Activated B cell treated with CpG ODN at 0.5 μM for 24 hours (primary cell): ENCODE measurements at regions of chr19 and their contacts with region 1.

Region 1: DNA sequence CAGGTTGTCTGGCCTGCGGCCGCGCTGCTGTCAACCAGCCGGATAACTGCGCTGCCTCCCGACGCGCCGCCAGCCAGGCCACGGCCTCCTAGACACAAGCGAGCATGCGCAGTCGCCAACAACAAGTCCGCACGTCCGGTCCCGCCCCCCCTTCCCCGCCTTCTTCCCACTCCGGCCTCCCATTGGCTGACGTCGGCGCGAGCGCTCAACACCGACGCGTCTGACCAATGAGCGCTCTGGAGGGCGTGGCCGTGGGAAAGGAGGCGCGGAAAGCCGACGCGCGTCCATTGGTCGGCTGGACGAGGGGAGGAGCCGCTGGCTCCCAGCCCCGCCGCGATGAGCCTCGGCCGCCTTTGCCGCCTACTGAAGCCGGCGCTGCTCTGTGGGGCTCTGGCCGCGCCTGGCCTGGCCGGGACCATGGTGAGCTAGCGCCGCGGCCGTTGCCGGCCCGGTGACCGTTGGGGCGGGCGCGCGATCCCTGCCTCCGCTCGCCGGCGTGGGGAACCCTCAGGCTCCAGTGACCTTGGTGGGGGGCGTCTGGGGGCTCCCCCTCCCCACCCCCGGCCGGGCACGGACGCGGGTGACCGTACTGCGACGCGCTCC is at the start of gene GPX4:
- DNase-seq: peak; percentile 93
- ATAC-seq: peak; percentile 86
- H3K4me3 Mint-ChIP-seq: peak within 1 kb of the TSS; percentile 81
- H3K27ac Mint-ChIP-seq: peak within 1 kb of the TSS; percentile 83
- H3K4me1 Mint-ChIP-seq: peaks cover 55% of the 10 kb centered on the region
- H3K27me3 Mint-ChIP-seq: no peaks in the 10 kb centered on the region
- CTCF ChIP-seq: no peak
- total RNA-seq, gene GPX4: 213 and 218 TPM in 2 replicates

Region 2: DNA sequence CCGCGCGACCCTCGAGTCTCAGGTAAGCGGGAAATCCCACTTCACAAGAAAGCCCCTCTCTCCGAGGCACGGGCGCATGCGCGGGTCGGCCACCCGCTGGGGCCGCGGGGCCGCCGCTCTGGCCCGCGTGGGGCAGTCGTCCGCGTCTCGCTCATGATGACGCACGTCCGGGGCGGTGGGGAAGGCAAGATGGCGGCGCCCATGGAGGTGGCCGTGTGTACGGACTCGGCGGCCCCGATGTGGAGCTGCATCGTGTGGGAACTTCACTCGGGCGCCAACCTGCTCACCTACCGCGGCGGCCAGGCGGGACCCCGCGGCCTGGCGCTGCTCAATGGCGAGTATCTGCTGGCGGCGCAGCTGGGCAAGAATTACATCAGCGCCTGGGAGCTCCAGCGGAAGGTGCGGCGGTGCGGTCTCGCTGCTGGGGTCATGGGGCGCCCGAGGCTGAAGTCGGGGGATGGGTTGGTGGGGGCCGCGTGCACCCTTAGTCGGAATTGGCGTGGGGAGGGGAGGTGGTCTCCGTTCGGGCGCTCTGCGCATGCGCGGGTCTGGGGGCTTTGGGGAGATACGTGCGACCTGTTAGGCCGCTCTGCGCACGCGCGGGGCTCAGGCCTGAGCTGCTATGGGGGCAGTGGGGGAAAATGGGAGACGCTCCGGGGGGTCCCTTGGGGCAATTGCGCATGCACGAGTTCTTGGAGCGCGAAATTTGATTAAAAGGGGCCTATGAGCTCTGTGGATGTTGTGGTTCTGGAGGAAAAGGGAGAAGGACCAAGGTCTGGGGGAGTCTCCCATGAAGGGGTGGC is 119.4 kb before region 1 on chr19 and contains the start of gene WDR18:
- CTCF ChIA-PET with region 1: no interaction called
- POLR2A ChIA-PET with region 1: no interaction called
- intact Hi-C with region 1: no loop called
- DNase-seq: peak; percentile 89
- ATAC-seq: peak; percentile 89
- H3K4me3 Mint-ChIP-seq: peak within 1 kb of the TSS; percentile 92
- H3K27ac Mint-ChIP-seq: peak within 1 kb of the TSS; percentile 89
- H3K4me1 Mint-ChIP-seq: peaks cover 18% of the 10 kb centered on the region
- H3K27me3 Mint-ChIP-seq: no peaks in the 10 kb centered on the region
- CTCF ChIP-seq: no peak
- total RNA-seq, gene WDR18: 66.5 and 84.7 TPM in 2 replicates

Region 3: GRCh38 chr19:1020868-1021425 is 82.9 kb before region 1 on chr19 and contains the start of gene TMEM259:
- CTCF ChIA-PET with region 1: no interaction called
- POLR2A ChIA-PET with region 1: interaction called, 4 read pairs
- intact Hi-C with region 1: loop called (anchors 1 kb)
- DNase-seq: peak; percentile 95
- ATAC-seq: peak; percentile 87
- H3K4me3 Mint-ChIP-seq: peak within 1 kb of the TSS; percentile 87
- H3K27ac Mint-ChIP-seq: peak within 1 kb of the TSS; percentile 99
- H3K4me1 Mint-ChIP-seq: peaks cover 53% of the 10 kb centered on the region
- H3K27me3 Mint-ChIP-seq: no peaks in the 10 kb centered on the region
- CTCF ChIP-seq: no peak
- total RNA-seq, gene TMEM259: 223 and 257 TPM in 2 replicates

Region 4: GRCh38 chr19:1039646-1040475 is 63.9 kb before region 1 on chr19 and contains the start of gene ABCA7:
- CTCF ChIA-PET with region 1: no interaction called
- POLR2A ChIA-PET with region 1: interaction called, 21 read pairs
- intact Hi-C with region 1: no loop called
- DNase-seq: peak; percentile 99
- ATAC-seq: peak; percentile 78
- H3K4me3 Mint-ChIP-seq: peak within 1 kb of the TSS; percentile 98
- H3K27ac Mint-ChIP-seq: peak within 1 kb of the TSS; percentile 96
- H3K4me1 Mint-ChIP-seq: peaks cover 61% of the 10 kb centered on the region
- H3K27me3 Mint-ChIP-seq: no peaks in the 10 kb centered on the region
- CTCF ChIP-seq: no peak
- total RNA-seq, gene ABCA7: 164 and 188 TPM in 2 replicates

Region 5: DNA sequence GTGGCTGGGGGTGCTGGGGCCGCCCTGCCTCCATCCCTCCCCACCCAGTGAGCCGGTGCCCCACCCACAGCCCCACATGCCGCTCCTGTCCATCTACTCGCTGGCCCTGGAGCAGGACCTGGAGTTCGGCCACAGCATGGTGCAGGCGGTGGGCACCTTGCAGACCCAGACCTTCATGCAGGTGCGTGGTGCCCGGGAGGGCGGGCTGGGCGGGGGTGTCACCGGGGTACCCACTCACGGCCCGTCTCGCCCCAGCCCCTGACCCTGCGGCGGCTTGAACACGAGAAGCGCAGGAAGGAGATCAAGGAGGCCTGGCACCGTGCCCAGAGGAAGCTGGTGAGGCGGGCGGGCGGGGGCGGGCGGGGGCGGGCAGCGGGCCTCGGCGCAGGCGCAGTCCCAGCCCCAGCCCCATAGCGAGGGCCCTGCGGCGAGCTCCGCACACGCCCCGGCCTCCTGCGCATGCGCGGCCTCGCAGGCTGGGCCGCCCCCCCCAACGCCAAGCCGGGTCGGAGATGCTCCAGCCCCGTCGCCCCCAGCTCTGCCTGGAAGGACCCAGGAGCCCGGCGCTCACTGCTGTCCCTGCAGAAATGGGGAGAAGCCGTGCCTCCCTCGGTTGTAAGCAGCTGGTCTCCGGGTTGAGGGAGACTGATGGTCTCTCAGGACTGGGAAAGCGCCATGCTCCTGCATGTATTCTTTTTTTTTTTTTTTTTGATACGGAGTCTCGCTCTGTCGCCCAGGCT is 29.1 kb before region 1 on chr19:
- CTCF ChIA-PET with region 1: no interaction called
- POLR2A ChIA-PET with region 1: interaction called, 41 read pairs
- intact Hi-C with region 1: loop called (anchors 2 kb)
- DNase-seq: peak; percentile 82
- ATAC-seq: peak; percentile 37
- H3K4me3 Mint-ChIP-seq: peak overlapping the region; percentile 53
- H3K27ac Mint-ChIP-seq: peak overlapping the region; percentile 93
- H3K4me1 Mint-ChIP-seq: peaks cover 62% of the 10 kb centered on the region
- H3K27me3 Mint-ChIP-seq: no peaks in the 10 kb centered on the region
- CTCF ChIP-seq: no peak

Region 6: GRCh38 chr19:1131738-1132551 is 28.1 kb after region 1 on chr19:
- CTCF ChIA-PET with region 1: no interaction called
- POLR2A ChIA-PET with region 1: interaction called, 13 read pairs
- intact Hi-C with region 1: loop called (anchors 2 kb)
- DNase-seq: peak; percentile 76
- ATAC-seq: peak; percentile 65
- H3K4me3 Mint-ChIP-seq: peak overlapping the region; percentile 86
- H3K27ac Mint-ChIP-seq: peak overlapping the region; percentile 77
- H3K4me1 Mint-ChIP-seq: peaks cover 47% of the 10 kb centered on the region
- H3K27me3 Mint-ChIP-seq: no peaks in the 10 kb centered on the region
- CTCF ChIP-seq: no peak

Region 7: DNA sequence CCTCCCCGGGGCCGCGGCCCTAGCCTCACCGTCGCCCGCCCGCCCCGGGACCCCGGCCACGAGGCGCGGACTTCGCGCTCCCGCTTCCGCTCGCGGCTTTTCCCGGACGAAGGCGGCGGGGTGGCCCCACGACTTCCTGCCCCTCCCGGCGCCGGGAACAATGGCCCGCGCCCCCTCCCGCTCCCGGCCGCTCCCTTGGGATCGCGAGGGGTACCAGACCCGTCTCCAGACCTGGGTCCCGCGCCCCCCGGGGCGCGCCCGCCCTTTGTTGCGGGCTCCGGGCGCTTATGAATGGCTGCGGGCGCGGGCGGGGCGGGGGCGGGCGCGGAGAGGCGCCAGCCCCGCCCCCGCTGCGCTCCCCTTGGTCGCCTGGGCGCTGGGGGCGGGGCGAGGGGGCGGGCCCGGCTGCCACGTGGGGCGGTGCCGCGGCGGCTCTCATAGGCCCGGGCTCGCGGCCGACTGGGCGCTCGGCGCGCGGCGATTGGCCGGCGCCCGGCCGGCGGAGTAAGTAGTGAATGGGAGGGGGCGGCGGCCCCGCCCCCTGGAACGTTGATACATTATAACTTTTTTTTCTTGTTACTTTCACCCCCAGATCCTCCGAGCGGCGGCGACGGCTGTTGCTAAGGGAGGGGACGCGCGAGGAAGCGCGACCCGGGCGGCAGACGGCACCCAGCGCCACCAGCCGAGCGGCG is 145.6 kb after region 1 on chr19:
- CTCF ChIA-PET with region 1: no interaction called
- POLR2A ChIA-PET with region 1: interaction called, 12 read pairs
- intact Hi-C with region 1: no loop called
- DNase-seq: peak; percentile 84
- ATAC-seq: peak; percentile 49
- H3K4me3 Mint-ChIP-seq: peak overlapping the region; percentile 80
- H3K27ac Mint-ChIP-seq: peak overlapping the region; percentile 81
- H3K4me1 Mint-ChIP-seq: peaks cover 31% of the 10 kb centered on the region
- H3K27me3 Mint-ChIP-seq: no peaks in the 10 kb centered on the region
- CTCF ChIP-seq: no peak